ENCODE measurements at regions of chr22 and their contacts with region 1.

Region 1: DNA sequence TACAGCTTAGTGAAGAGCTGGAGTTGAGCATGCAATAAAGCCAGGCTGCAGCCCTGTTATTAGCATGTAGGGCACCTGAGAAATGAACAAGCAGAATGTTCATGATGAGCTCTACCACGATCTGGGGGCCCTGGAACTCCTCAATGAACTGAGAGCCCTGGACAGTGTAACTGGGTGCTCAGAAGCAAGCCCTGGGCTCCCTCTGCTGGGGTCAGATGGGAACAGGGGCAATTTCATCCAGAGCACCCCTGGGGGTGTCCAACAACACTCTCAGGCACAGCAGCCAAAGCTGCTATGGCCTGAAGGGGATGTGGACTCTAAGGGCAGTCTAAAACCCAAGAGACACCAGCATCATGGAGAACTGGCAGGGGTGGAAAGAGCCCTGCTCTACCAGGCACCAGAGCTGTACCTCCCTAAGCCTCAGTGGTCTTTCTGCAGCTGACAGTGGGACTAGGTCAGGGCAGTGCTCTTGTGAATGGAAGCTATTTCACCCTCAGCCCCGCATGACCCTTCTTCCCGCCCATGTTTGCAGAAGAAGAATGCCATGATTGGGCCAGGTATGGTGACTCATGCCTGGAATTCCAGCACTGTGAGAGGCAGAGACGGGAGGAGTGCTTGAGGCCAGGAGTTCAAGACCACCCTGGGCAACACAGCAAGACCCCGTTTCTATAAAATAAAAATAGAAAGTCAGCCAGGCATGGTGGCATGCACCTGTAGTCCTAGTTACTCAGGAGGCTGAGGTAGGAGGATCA is 28.9 kb downstream of the THOC5 start:
- DNase-seq: peak; percentile 40
- H3K4me3 Mint-ChIP-seq: no peak overlapping the region
- H3K27ac Mint-ChIP-seq: no peak overlapping the region
- H3K4me1 Mint-ChIP-seq: no peaks in the 10 kb centered on the region
- H3K27me3 Mint-ChIP-seq: no peaks in the 10 kb centered on the region

Region 2: DNA sequence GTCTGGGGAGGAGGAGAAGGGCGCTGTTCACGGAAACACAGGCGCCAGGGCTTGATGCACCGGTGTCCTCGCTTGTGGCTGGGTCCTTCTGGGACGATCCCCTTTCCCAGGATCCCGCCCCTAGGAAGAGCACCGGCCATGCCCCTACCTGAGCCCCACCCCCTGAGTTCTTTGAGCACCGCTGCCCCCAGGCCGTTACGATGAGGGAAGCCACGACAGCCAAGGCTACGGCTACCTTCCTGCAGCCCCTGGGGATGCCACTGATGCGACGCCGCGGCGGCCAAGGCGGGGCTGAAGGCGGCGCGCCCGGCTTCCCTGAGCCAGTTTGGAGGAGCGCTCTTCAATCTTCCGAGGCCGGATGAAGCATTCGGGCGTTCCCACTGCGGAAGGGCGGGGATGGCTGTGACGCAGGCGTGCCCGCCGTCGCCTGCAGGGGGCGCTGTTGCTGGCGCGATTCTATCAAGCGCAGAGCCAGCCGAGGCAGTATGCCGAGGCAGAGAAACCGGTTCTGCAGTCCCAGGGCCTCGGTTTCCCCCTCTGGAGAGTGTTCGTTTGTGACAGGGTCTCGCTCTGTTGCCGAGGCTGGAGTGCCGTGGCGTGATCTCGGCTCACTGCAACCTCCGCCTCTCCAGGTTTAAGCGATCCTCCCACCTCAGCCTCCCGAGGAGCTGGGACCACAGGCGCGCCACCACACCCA is 54.3 kb before region 1 on chr22:
- CTCF ChIA-PET with region 1: interaction called, 10 read pairs
- intact Hi-C with region 1: no loop called
- DNase-seq: peak; percentile 80
- H3K4me3 Mint-ChIP-seq: peak overlapping the region; percentile 32
- H3K27ac Mint-ChIP-seq: no peak overlapping the region
- H3K4me1 Mint-ChIP-seq: no peaks in the 10 kb centered on the region
- H3K27me3 Mint-ChIP-seq: peaks cover 9% of the 10 kb centered on the region

Measured in activated naive CD4-positive, alpha-beta T cell treated with anti-CD3 and anti-CD28 coated beads for 36 hours (primary cell).